ENCODE measurements at regions of chr1 and their contacts with region 1.

Region 1: DNA sequence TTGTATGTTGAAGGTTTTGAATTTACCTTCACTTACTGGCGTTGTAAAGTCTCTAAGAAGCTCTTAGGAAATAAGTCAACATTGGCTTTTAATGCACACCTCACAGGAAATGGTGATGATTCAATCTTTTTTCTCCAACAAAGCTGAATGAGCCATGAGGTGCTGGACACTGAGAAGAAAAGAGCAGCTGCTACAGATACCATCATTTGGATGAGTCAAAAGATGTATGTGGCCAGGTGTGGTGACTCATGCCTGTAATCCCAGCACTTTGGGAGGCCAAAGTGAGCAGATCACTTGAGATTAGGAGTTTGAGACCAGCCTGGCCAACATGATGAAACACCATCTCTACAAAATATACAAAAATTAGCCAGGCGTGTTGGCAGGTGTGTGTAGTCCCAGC is 3.3 kb upstream of the IL23R start:
- DNase-seq: peak; percentile 97
- ATAC-seq: peak; percentile 97
- H3K4me3 ChIP-seq: no peak overlapping the region
- H3K27ac ChIP-seq: peak overlapping the region; percentile 92
- H3K4me1 ChIP-seq: peaks cover 16% of the 10 kb centered on the region
- H3K27me3 ChIP-seq: no peaks in the 10 kb centered on the region
- CTCF ChIP-seq: no peak

Region 2: DNA sequence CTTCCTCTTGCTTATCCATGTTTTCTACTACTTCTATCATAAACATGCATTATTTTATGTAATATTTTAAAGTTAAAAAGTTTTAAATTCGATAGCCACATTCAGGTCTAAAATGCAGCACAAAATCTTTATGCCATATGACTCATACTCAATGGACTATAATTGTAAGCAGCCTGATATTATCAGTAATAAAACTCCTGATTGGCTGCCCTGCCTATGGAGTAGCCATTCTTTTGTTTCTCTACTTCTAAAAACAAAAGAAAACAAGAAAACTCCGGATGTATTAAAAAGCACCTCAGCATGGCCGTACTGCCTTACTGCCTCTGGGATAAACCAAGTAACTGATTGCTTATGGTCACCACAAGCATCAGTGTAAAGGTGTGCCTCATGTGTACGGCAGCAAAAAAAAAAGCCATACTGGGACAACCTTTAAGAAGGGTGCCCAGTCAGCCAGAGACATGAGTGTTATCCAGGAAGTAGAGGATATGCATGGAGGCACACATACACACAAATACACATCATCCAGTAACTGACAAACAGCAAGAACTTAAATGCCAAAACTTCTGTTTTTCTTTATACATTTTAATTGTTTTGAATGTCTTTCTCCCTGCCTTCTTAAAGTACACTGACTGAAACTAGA is 118.2 kb before region 1 on chr1:
- CTCF ChIA-PET with region 1: no interaction called
- POLR2A ChIA-PET with region 1: no interaction called
- intact Hi-C with region 1: no loop called
- DNase-seq: no peak
- ATAC-seq: no peak; the same call in 1 of the 2 replicates
- H3K4me3 ChIP-seq: no peak overlapping the region
- H3K27ac ChIP-seq: no peak overlapping the region
- H3K4me1 ChIP-seq: no peaks in the 10 kb centered on the region
- H3K27me3 ChIP-seq: no peaks in the 10 kb centered on the region
- CTCF ChIP-seq: no peak

Region 3: DNA sequence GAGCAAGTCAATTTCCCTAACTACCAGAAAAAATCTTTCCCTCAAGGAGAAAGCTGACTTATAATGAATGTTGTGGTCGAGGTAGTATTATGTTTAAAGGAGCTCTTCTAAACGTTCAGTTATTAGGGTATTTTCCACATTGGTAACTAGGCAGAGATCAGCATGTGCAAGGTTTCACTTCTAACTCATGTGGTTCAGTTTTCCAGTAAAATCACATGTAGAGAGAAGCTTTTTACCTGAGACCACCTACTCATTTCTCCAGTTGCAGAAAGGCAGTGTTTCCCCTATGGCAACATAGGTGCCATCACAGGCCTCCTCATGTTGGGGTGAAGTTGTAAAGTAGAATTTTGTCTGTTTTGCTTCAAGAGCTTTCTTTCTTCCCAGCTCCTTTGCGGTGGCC is 27.0 kb after region 1 on chr1:
- CTCF ChIA-PET with region 1: no interaction called
- POLR2A ChIA-PET with region 1: no interaction called
- intact Hi-C with region 1: loop called (anchors 1 kb)
- DNase-seq: no peak
- ATAC-seq: no peak
- H3K4me3 ChIP-seq: peak overlapping the region; percentile 37; the same call in 1 of the 2 replicates
- H3K27ac ChIP-seq: peak overlapping the region; percentile 89
- H3K4me1 ChIP-seq: peaks cover 28% of the 10 kb centered on the region
- H3K27me3 ChIP-seq: no peaks in the 10 kb centered on the region
- CTCF ChIP-seq: no peak

Measured in PC-3 (cell line).